AG04450 (cell line): ENCODE measurements at regions of chr10 and their contacts with region 1.

Region 1: GRCh38 chr10:125332548-125333208 is 172.3 kb upstream of the CTBP2 start:
- DNase-seq: no peak
- H3K4me3 ChIP-seq: no peak overlapping the region
- H3K27ac ChIP-seq: no peak overlapping the region
- H3K27me3 ChIP-seq: peaks cover 6% of the 10 kb centered on the region
- CTCF ChIP-seq: no peak

Region 2: DNA sequence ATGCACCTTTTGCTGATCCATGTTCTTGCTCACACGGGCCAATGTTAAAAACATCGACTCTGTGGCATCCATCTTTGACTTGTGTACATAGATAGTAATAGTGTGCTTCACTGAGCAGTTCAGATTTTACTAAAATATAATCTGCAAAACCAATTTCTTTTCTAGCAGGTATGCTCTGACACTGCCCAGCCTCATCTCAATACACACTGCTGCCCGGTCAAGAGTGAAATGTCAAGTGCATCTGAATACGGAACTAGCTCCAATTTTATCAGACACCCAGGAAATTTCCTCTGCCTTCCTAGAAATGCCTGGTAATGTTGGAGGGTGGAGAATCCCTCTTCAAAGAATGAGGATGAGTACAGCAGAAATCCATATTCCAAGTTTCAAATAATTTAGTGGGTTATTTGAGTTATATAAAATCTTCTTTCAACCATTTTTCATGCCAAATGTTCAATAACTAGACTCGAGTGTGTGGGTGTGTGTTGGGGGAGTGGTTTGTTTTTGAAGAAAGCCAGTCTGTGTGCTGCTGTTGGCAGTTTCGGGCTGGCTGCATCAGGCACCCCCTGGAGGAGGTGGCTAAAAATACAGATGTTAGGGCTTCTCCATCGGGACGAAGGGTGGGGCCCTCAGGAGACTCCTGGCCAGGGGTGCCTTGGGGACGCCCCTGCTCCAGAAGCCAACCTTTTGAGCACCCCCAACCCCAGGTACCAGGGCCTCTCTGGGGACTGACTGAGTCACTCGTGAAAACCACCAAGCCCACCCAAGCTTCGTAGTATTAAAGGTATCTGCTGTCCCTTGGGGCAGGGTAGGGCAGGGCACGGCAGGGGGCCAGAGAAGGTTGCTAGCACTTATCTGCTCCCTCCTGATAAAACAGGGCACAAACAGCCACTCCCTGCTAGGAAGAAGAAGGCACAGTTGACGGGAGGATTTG is 187.7 kb before region 1 on chr10:
- CTCF ChIA-PET with region 1: no interaction called
- POLR2A ChIA-PET with region 1: no interaction called
- DNase-seq: no peak
- H3K4me3 ChIP-seq: no peak overlapping the region
- H3K27ac ChIP-seq: peak overlapping the region; percentile 21
- H3K27me3 ChIP-seq: no peaks in the 10 kb centered on the region
- CTCF ChIP-seq: peak; percentile 62

Region 3: GRCh38 chr10:125160856-125161706 is 171.6 kb before region 1 on chr10:
- CTCF ChIA-PET with region 1: no interaction called
- POLR2A ChIA-PET with region 1: interaction called, 12 read pairs
- DNase-seq: peak; percentile 50
- H3K4me3 ChIP-seq: peak overlapping the region; percentile 71
- H3K27ac ChIP-seq: peak overlapping the region; percentile 83
- H3K27me3 ChIP-seq: no peaks in the 10 kb centered on the region
- CTCF ChIP-seq: peak; percentile 50

Region 4: DNA sequence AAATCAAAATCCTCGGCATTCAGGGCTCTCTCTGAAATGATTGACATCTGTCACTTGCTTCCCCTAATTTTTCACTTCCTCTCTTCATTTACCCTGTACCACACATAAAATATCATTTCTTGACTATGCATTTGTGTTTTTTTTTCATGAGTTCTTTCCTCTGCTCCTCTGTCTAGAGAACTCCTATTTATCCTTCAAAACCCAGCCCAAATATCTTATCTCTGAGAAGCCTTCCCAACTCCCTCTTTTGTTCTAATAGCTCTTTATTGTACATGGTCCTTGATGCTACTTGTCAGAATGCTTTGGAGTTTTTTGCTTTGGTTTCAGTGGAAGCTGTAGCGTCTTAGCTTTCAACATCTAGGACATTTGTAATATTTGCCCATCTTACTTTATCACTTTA is 17.8 kb after region 1 on chr10:
- CTCF ChIA-PET with region 1: no interaction called
- POLR2A ChIA-PET with region 1: no interaction called
- DNase-seq: no peak
- H3K4me3 ChIP-seq: no peak overlapping the region
- H3K27ac ChIP-seq: no peak overlapping the region
- H3K27me3 ChIP-seq: peaks cover 1% of the 10 kb centered on the region
- CTCF ChIP-seq: no peak